IMR-90 (cell line): ENCODE measurements at regions of chr4 and their contacts with region 1.

Region 1: DNA sequence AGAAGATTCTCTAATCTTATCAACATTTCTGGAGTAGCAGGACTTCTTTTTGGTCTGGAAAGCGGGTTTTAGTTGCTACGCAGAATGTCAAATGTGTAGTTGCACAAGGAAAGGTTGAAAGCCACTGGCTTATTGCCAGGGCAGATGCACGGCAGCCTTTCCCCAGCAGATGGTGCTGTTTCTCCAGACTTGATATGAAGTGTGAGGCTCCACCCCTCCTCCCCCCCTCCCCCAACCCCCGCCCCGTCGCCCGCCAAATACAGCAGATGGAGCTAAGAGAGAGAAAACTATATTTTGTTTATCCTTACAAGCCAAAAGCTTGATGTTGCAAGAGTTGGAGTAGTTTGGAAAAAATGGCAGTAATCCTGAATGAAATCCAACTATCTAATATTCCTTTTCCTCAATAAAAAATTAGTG is 32.0 kb downstream of the ENOPH1 start:
- DNase-seq: peak; percentile 86
- ATAC-seq: peak; percentile 92
- H3K4me3 ChIP-seq: no peak overlapping the region
- H3K27ac ChIP-seq: no peak overlapping the region
- H3K4me1 ChIP-seq: no peaks in the 10 kb centered on the region
- H3K27me3 ChIP-seq: no peaks in the 10 kb centered on the region
- CTCF ChIP-seq: peak; percentile 81
- POLR2A ChIP-seq: no peak
- RAD21 ChIP-seq: peak; percentile 80

Region 2: GRCh38 chr4:82798168-82799005 is 336.0 kb after region 1 on chr4 and contains the start of gene SCD5:
- CTCF ChIA-PET with region 1: no interaction called
- POLR2A ChIA-PET with region 1: no interaction called
- dilution Hi-C with region 1: no loop called
- in situ Hi-C with region 1: no loop called
- intact Hi-C with region 1: loop called (anchors 2 kb)
- DNase-seq: peak; percentile 82
- ATAC-seq: peak; percentile 96
- H3K4me3 ChIP-seq: peak within 1 kb of the TSS; percentile 92
- H3K27ac ChIP-seq: peak within 1 kb of the TSS; percentile 27; the same call in 1 of the 2 replicates
- H3K4me1 ChIP-seq: peaks cover 10% of the 10 kb centered on the region
- H3K27me3 ChIP-seq: no peaks in the 10 kb centered on the region
- CTCF ChIP-seq: no peak
- POLR2A ChIP-seq: no peak
- RAD21 ChIP-seq: no peak
- total RNA-seq, gene SCD5: 12.4 and 17.2 TPM in 2 replicates

Region 3: DNA sequence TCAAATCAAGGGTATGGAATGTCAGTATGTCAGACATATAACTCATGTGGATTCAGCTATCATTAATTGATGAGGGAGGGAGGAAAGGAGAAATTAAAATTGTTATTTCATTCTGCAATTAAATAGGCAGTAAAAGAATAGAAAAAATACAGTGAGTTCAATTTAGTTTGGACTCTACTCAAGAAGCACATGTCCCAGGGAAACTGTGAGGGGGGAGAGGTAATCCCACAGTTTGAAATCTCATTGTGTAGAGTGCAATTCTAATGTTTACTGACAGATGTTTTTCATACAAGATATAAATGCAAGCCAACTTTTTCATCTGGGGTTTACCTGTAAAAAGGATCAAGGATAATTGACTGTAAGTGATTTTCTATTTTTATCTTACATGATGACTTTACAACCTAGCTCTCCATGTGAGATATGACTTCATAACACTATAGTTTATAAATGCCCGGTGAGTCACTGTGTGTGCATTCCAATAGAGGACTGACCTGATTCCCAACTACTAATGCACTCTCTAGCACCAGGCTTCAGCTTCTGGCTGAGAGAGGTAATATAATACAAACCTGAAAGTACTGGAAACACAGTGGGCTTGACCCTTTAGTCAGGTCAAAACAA is 371.4 kb after region 1 on chr4:
- CTCF ChIA-PET with region 1: no interaction called
- POLR2A ChIA-PET with region 1: no interaction called
- dilution Hi-C with region 1: no loop called
- in situ Hi-C with region 1: loop called (anchors 10 kb)
- intact Hi-C with region 1: loop called (anchors 1 kb)
- DNase-seq: peak; percentile 94
- ATAC-seq: peak; percentile 99
- H3K4me3 ChIP-seq: no peak overlapping the region
- H3K27ac ChIP-seq: no peak overlapping the region
- H3K4me1 ChIP-seq: peaks cover 2% of the 10 kb centered on the region; the same call in 1 of the 2 replicates
- H3K27me3 ChIP-seq: no peaks in the 10 kb centered on the region
- CTCF ChIP-seq: peak; percentile 25; the same call in 1 of the 2 replicates
- POLR2A ChIP-seq: no peak
- RAD21 ChIP-seq: 0 out of 2 replicates have a peak, but pooled peaks have one; percentile 24

Region 4: GRCh38 chr4:82900331-82901128 is 438.1 kb after region 1 on chr4 and contains the start of gene THAP9:
- CTCF ChIA-PET with region 1: no interaction called
- POLR2A ChIA-PET with region 1: no interaction called
- dilution Hi-C with region 1: no loop called
- in situ Hi-C with region 1: no loop called
- intact Hi-C with region 1: loop called (anchors 2 kb)
- DNase-seq: peak; percentile 100
- ATAC-seq: peak; percentile 95
- H3K4me3 ChIP-seq: peak within 1 kb of the TSS; percentile 69
- H3K27ac ChIP-seq: peak within 1 kb of the TSS; percentile 88
- H3K4me1 ChIP-seq: no peaks in the 10 kb centered on the region
- H3K27me3 ChIP-seq: no peaks in the 10 kb centered on the region
- CTCF ChIP-seq: no peak
- POLR2A ChIP-seq: peak; percentile 96
- RAD21 ChIP-seq: no peak
- total RNA-seq, gene THAP9: 2.9 and 4.2 TPM in 2 replicates

Region 5: DNA sequence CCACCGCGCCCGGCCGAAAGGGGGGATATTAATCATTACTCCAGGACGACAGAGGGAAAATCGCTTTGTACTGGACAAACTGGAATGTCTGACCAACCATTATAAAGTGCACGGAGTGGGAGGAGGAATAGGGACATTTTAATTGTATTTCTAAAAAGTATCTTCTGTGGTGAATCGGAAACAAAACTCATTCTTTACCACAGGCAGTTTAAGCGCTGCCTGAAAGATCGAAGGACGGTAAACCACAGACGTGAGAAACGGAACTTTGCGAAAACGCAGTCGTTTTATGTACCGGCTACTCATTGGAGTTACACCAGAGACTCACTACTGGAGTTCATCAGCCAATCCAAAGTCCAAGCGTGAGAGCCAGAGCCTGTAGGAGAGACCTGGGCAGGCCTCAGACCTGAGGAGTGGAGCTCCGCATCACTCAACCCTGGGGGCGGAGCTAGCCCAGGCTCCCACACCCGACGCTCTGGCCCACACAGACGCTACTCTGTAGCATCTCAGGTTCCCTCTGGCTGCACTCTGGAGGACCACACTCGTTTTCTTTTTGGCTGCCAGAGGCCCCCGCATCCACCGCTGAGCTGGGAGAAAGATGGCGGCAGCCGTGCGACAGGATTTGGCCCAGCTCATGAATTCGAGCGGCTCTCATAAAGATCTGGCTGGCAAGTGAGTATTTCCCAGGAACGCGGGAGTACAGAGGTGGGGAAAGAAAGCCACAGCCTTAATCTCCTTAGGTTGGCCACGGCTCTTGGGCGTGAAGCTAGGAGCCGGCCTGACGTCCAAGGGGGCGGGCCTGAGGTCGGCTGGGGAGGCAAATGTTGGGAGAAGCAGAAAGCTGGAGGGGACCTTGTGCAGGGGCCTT is 572.4 kb after region 1 on chr4 and contains the start of gene COPS4:
- CTCF ChIA-PET with region 1: no interaction called
- POLR2A ChIA-PET with region 1: no interaction called
- dilution Hi-C with region 1: no loop called
- in situ Hi-C with region 1: no loop called
- intact Hi-C with region 1: loop called (anchors 1 kb)
- DNase-seq: peak; percentile 100
- ATAC-seq: peak; percentile 99
- H3K4me3 ChIP-seq: peak within 1 kb of the TSS; percentile 62
- H3K27ac ChIP-seq: peak within 1 kb of the TSS; percentile 83
- H3K4me1 ChIP-seq: peaks cover 5% of the 10 kb centered on the region
- H3K27me3 ChIP-seq: peaks cover 3% of the 10 kb centered on the region
- CTCF ChIP-seq: peak; percentile 40
- POLR2A ChIP-seq: peak; percentile 67
- RAD21 ChIP-seq: peak; percentile 21
- total RNA-seq, gene COPS4: 107 and 115 TPM in 2 replicates

Region 6: GRCh38 chr4:83284193-83285054 is 822.0 kb after region 1 on chr4 and contains the start of gene COQ2:
- CTCF ChIA-PET with region 1: interaction called, 3 read pairs
- POLR2A ChIA-PET with region 1: no interaction called
- dilution Hi-C with region 1: no loop called
- in situ Hi-C with region 1: no loop called
- intact Hi-C with region 1: loop called (anchors 1 kb)
- DNase-seq: peak; percentile 92
- ATAC-seq: peak; percentile 96
- H3K4me3 ChIP-seq: peak within 1 kb of the TSS; percentile 74
- H3K27ac ChIP-seq: peak within 1 kb of the TSS; percentile 68
- H3K4me1 ChIP-seq: no peaks in the 10 kb centered on the region
- H3K27me3 ChIP-seq: no peaks in the 10 kb centered on the region
- CTCF ChIP-seq: 0 out of 2 replicates have a peak, but pooled peaks have one; percentile 11
- POLR2A ChIP-seq: peak; percentile 84
- RAD21 ChIP-seq: peak; percentile 1; the same call in 1 of the 2 replicates
- total RNA-seq, gene COQ2: 7.3 and 8.9 TPM in 2 replicates